ENCODE measurements at regions of chr3 and their contacts with region 1.

Region 1: GRCh38 chr3:47113669-47114365 is 50.1 kb downstream of the SETD2 start:
- DNase-seq: no peak
- ATAC-seq: no peak
- H3K4me3 ChIP-seq: no peak overlapping the region
- H3K4me3 Mint-ChIP-seq: no peak overlapping the region
- H3K27ac ChIP-seq: no peak overlapping the region
- H3K27ac Mint-ChIP-seq: peak overlapping the region in 1 of 2 donors; percentile 48
- H3K4me1 ChIP-seq: peaks cover 5 to 9% of the 10 kb centered on the region in 2 experiments
- H3K4me1 Mint-ChIP-seq: peaks cover 15 to 17% (median 16%) of the 10 kb centered on the region in 3 donors
- H3K27me3 ChIP-seq: no peaks in the 10 kb centered on the region
- H3K27me3 Mint-ChIP-seq: no peaks in the 10 kb centered on the region

Region 2: GRCh38 chr3:47128137-47128536 is 14.3 kb after region 1 on chr3:
- CTCF ChIA-PET with region 1: no interaction called
- POLR2A ChIA-PET with region 1: interaction called in 1 of 2 experiments, 14 read pairs
- DNase-seq: no peak
- ATAC-seq: no peak
- H3K4me3 ChIP-seq: no peak overlapping the region
- H3K4me3 Mint-ChIP-seq: no peak overlapping the region
- H3K27ac ChIP-seq: no peak overlapping the region
- H3K27ac Mint-ChIP-seq: no peak overlapping the region
- H3K4me1 ChIP-seq: peaks cover 3 to 5% of the 10 kb centered on the region in 2 experiments
- H3K4me1 Mint-ChIP-seq: peaks cover 45 to 50% (median 46%) of the 10 kb centered on the region in 3 donors
- H3K27me3 ChIP-seq: no peaks in the 10 kb centered on the region
- H3K27me3 Mint-ChIP-seq: no peaks in the 10 kb centered on the region

Measured in T-cell (primary cell).